Activated T-helper 1 cell treated with anti-CD3 and anti-CD28 coated beads, Interleukin-12 subunit alpha, Interleukin-12 subunit beta, Interleukin-2, Interleukin-4 antibody, amounts not matched to agents 30 ng/mL and 10 ng/mL and 1 ng/mL, durations not matched to agents 14 hours and 24 hours and 36 hours (primary cell): ENCODE measurements at regions of chr1 and their contacts with region 1.

Region 1: DNA sequence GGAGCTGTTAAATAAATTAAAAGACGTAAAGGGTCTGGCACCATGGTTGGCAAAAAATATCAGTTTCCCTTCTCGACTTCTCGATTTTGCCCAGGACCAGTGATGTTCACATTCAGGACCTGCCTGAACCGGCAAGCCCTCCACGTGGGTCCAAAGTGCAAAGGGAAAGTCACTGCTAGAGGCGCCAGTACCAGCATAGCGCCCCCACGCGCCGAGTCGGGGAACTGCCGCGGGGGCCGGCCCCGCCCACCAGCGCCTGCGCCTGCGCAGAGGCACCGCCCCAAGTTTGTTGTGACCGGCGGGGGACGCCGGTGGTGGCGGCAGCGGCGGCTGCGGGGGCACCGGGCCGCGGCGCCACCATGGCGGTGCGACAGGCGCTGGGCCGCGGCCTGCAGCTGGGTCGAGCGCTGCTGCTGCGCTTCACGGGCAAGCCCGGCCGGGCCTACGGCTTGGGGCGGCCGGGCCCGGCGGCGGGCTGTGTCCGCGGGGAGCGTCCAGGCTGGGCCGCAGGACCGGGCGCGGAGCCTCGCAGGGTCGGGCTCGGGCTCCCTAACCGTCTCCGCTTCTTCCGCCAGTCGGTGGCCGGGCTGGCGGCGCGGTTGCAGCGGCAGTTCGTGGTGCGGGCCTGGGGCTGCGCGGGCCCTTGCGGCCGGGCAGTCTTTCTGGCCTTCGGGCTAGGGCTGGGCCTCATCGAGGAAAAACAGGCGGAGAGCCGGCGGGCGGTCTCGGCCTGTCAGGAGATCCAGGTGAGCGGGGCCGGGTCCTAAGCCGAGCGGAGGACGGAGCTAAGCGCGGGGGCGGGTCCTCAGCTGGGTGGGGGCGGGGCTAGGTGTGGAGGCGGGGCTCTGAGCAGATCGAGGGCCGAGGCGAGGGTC is at the start of gene PINK1:
- DNase-seq: peak; percentile 85
- H3K4me3 Mint-ChIP-seq: peak within 1 kb of the TSS; percentile 83
- H3K27ac Mint-ChIP-seq: peak within 1 kb of the TSS; percentile 48
- H3K4me1 Mint-ChIP-seq: peaks cover 10% of the 10 kb centered on the region
- H3K27me3 Mint-ChIP-seq: peaks cover 1% of the 10 kb centered on the region
- total RNA-seq, gene PINK1: 2.6 and 3.3 TPM in 2 replicates

Region 2: DNA sequence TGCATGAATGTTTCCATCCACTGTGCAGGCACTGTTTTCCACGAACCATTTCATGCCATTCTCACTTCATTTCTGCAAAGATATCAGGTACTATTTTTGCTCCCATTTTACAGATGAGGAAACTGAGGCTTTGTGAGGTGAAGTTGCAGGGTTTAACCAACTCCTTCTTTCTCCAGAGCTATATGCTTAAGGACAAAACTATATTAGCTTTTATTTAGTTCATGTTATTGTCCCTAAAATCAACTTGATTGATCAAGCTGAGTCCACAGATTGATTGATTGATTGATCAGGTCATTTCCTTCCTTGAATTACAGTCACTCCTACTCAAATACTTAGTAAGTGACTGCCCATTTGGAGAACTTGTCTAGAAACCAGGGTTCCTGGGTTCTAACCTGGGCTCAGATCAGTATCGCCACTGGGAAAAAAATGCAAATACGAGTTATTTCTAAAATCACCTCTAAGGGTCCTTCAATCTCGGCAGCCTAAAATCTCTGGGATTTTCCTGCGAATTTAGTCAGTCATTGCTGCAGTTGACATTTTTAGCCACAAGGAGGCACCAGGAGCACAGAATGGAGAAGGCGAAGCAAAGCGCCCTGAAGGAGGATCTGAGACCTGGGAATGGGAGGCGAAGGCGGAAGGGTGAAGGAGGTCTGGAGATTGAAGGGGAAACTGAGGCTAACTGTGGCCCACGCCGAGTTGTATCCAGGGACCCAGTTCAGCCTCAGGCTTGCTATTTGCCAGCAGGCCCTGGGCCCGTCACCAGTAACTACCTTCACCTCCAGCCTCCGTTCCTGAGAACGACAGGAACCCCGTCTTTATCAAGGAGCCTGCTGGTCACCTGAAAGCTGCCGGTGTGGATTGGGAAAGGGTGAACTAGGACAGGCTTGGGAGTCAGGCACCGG is 111.2 kb before region 1 on chr1:
- intact Hi-C with region 1: loop called (anchors 2 kb)
- DNase-seq: peak; percentile 35
- H3K4me3 Mint-ChIP-seq: no peak overlapping the region
- H3K27ac Mint-ChIP-seq: no peak overlapping the region
- H3K4me1 Mint-ChIP-seq: no peaks in the 10 kb centered on the region
- H3K27me3 Mint-ChIP-seq: peaks cover 3% of the 10 kb centered on the region

Region 3: GRCh38 chr1:20574686-20575540 is 58.5 kb before region 1 on chr1:
- intact Hi-C with region 1: loop called (anchors 1 kb)
- DNase-seq: peak; percentile 62
- H3K4me3 Mint-ChIP-seq: no peak overlapping the region
- H3K27ac Mint-ChIP-seq: no peak overlapping the region
- H3K4me1 Mint-ChIP-seq: peaks cover 6% of the 10 kb centered on the region
- H3K27me3 Mint-ChIP-seq: peaks cover 10% of the 10 kb centered on the region